Head of caudate nucleus (tissue), 42 donors: ENCODE measurements at regions of chr11 and their contacts with region 1.

Region 1: GRCh38 chr11:106076919-106077608 is at the start of gene KBTBD3:
- DNase-seq: peak; percentile 98 to 100 (median 100)

Region 2: GRCh38 chr11:106021967-106022794 is 54.9 kb before region 1 on chr11 and contains the start of gene MSANTD4:
- intact Hi-C with region 1: loop called (anchors 2 kb)
- DNase-seq: peak; percentile 98 to 100 (median 100)

Region 3: GRCh38 chr11:106133529-106133928 is 56.5 kb after region 1 on chr11:
- intact Hi-C with region 1: no loop called
- DNase-seq: no peak